ENCODE measurements at regions of chr2 and their contacts with region 1.

Region 1: DNA sequence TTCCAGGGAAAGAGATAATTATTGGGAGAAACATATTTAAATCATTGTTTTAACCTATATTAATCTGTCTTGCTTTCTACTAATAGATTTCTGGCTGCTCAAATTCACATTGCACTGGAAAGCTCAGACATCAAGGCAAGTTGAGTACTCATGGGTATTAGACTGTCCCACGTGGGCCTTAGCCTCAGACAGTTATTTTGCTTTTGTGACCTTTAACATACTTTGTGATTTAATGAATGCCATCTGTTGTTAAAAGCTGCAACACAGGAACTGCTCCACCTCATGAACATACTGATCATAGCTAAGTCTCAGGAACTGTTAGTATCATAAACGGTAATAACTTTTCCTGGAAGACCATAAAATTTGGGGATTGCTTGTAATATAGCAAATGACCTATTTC is 2.7 kb upstream of the LCT start:
- DNase-seq: no peak
- ATAC-seq: no peak
- H3K4me3 ChIP-seq: no peak overlapping the region
- H3K4me3 Mint-ChIP-seq: no peak overlapping the region
- H3K27ac ChIP-seq: no peak overlapping the region
- H3K27ac Mint-ChIP-seq: peak overlapping the region in 2 of 9 donors; percentile 7 to 11
- H3K4me1 ChIP-seq: no peaks in the 10 kb centered on the region
- H3K4me1 Mint-ChIP-seq: peaks cover 2 to 41% (median 20%) of the 10 kb centered on the region in 7 donors
- H3K27me3 ChIP-seq: no peaks in the 10 kb centered on the region
- H3K27me3 Mint-ChIP-seq: no peaks in the 10 kb centered on the region

Region 2: DNA sequence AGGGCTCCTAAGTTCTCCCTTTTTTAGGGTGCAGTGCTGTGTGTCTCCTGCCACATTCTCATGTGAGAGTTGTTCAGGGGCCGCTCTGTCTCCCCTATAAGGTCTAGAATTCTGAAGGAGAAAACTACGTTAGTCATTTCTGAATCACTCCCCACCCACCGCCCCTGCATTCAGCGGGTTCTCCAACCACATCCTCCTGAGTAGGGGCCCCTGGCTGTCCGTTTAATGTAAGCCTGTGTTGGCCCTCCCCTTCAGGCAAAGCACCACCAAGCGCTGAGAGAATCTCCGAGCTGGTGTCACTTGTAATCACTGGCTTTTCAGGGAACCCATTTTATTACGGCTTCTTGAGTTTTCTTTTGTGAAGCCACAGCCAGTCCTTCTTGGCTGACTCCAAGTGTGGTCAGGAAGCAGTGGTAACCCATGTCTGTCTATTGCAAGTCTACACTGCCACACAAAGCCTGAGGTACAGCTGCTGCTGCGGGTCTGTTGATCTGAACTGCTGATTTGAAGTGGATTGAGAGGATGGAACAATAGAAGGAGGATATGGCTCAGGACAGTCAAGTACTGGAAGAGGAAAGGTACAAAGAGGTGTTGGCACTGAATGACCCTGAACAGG is 19.6 kb before region 1 on chr2:
- CTCF ChIA-PET with region 1: no interaction called
- POLR2A ChIA-PET with region 1: no interaction called
- intact Hi-C with region 1: loop called in 1 of 2 experiments (anchors 2 kb)
- DNase-seq: peak in 8 of 9 donors; percentile 17 to 84 (median 42)
- ATAC-seq: peak; percentile 79
- H3K4me3 ChIP-seq: peak overlapping the region; percentile 13
- H3K4me3 Mint-ChIP-seq: peak overlapping the region; percentile 20 to 79 (median 58)
- H3K27ac ChIP-seq: no peak overlapping the region
- H3K27ac Mint-ChIP-seq: peak overlapping the region in 7 of 9 donors; percentile 9 to 81 (median 47)
- H3K4me1 ChIP-seq: peaks cover 10 to 11% of the 10 kb centered on the region in 2 donors
- H3K4me1 Mint-ChIP-seq: peaks cover 7 to 43% (median 24%) of the 10 kb centered on the region in 7 donors
- H3K27me3 ChIP-seq: no peaks in the 10 kb centered on the region
- H3K27me3 Mint-ChIP-seq: no peaks in the 10 kb centered on the region

Region 3: DNA sequence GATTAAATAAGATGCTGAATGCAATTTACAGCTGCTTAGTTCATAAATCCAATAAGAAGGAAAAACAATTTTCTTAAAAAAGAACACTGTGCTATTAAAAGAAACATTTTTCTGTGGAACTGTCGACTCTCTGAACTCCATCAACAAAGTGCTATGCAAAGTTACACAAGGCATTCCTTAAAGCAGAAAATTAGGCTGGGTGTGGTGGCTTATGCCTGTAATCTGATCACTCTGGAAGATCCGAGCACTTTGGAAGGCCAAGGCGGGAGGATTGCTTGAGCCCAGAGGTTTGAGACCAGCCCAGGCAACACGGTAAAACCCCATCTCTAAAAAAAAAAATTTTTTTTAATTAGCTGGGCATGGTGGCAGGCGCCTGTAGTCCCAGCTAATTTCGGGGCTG is 23.5 kb after region 1 on chr2:
- CTCF ChIA-PET with region 1: no interaction called
- POLR2A ChIA-PET with region 1: no interaction called
- intact Hi-C with region 1: no loop called
- DNase-seq: no peak
- ATAC-seq: no peak
- H3K4me3 ChIP-seq: no peak overlapping the region
- H3K4me3 Mint-ChIP-seq: no peak overlapping the region
- H3K27ac ChIP-seq: no peak overlapping the region
- H3K27ac Mint-ChIP-seq: peak overlapping the region in 1 of 9 donors; percentile 22
- H3K4me1 ChIP-seq: no peaks in the 10 kb centered on the region
- H3K4me1 Mint-ChIP-seq: peaks cover 0 to 27% (median 4%) of the 10 kb centered on the region in 7 donors
- H3K27me3 ChIP-seq: no peaks in the 10 kb centered on the region
- H3K27me3 Mint-ChIP-seq: no peaks in the 10 kb centered on the region

Measured in naive thymus-derived CD4-positive, alpha-beta T cell (primary cell).